RWPE1 (cell line): ENCODE measurements at regions of chr11 and their contacts with region 1.

Region 1: DNA sequence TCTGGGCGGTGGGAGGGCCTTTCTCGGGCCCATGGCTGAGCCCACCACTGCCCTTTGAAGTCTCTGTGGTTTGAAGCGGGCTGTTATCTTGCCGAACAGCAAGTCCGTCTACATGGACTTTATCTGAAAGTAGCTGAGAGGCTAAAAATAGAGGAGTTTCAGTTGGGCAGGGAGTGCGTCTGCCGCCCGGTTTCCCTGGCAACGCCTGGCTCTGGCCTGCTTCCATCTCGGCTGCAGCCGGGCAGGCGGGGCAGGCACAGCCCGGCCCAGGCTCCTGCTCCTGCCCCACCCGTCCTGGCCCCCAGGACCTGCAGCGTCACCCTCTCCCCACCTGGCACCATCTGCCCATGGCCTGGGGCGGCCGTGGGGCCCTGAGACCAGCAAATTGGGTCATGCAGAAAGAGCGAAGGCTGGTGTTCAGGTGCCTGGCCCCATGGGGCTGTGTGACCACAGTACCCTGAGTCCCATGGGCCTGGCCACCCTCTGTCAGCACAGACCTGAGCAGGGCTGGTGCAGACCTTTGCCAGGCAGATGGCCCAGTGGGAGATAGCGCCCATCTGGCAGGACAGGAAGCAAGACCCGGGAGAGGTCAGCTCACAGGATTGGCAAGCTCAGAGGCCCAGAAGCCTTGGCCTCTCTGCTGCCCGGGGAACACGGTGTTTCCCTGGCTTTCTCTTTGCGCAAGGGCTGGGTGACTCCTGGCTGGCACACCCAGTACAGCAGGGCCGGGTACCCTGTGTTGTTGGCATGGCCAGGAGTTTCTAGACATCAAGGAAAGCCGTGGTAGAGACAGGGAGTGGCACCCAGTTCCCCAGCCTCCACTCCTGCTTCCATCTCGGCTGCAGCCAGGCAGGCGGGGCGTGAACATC is 79.1 kb upstream of the KCNQ1OT1 start:
- DNase-seq: peak; percentile 80
- H3K27ac ChIP-seq: peak overlapping the region; percentile 99
- CTCF ChIP-seq: no peak; the same call in 1 of the 2 replicates

Region 2: DNA sequence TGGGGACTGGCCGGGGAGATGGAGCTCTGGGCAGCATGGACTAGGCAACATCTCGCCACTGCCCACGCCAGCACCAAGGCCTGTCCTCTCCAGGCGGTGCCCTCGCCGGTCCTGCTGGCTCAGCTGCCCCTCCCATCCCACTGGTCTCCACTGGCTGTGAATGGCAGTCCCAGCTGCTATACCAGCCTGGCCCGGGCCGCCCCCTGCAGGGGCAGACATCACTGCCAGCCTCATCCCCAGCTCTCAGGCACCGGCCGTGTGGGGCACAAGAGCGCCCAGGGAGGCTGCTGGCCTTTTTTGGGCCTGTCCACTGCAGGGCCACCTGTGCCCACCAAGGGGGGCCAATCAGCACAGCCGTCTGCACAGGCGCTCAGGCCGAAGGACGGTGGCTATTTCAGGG is 751.2 kb before region 1 on chr11:
- CTCF ChIA-PET with region 1: no interaction called
- POLR2A ChIA-PET with region 1: no interaction called
- DNase-seq: no peak
- H3K27ac ChIP-seq: no peak overlapping the region
- CTCF ChIP-seq: no peak

Region 3: GRCh38 chr11:2791521-2792380 is 12.9 kb after region 1 on chr11:
- CTCF ChIA-PET with region 1: no interaction called
- POLR2A ChIA-PET with region 1: no interaction called
- DNase-seq: no peak
- H3K27ac ChIP-seq: no peak overlapping the region
- CTCF ChIP-seq: no peak

Region 4: GRCh38 chr11:2885676-2886081 is 106.8 kb after region 1 on chr11 and contains the start of gene CDKN1C:
- CTCF ChIA-PET with region 1: interaction called, 10 read pairs
- POLR2A ChIA-PET with region 1: no interaction called
- DNase-seq: peak; percentile 89
- H3K27ac ChIP-seq: peak within 1 kb of the TSS; percentile 67
- CTCF ChIP-seq: no peak